SK-N-SH (cell line): ENCODE measurements at regions of chr12 and their contacts with region 1.

Region 1: DNA sequence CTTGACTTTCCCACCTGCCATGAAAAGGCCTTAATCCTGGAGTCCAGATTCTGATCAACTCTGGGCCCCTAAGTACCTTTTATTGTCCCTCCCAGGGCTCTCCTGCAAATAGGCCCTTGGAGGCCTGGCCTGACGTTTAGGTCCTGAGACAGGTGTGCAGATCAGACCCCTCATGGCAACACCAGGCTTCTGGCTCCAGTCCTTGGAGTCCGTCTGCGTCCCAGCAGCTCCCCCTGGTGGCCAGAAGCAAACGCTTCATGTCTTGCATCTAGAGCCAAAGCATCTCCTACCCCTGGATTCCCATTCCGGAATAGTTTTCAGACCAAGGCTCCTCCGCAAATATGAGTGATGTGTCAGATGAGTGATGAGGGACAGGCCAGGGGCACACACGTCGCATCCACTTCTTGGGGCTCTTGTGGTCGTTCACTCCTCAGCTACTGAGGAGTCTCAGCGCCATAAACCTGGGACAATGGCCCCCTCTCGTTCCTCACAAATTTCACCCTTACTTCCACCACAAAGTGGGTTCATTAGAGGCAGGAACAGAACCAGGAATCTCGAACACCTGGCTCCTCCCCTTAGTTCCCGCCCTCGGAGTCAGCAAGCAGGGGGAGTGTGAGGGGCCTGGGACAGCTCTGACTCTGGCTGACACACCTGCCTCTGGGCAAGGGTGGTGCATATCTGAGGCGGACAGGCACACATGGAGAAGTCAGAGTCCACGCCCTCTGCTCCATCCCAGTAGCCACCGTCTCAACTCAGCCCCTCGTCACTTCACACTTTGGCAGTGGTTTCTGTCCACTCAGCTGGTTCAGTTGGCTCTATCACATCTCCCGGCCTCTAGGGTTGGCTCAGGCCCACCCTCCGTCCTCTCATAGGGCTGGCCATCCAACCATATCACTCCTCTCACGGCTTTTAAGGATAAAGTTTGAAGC is 77.9 kb upstream of the PWP1 start:
- DNase-seq: peak; percentile 81
- H3K4me3 ChIP-seq: peak overlapping the region in 1 of 2 experiments; percentile 34; a peak in 1 of 4 replicates
- H3K27ac ChIP-seq: no peak overlapping the region
- H3K4me1 ChIP-seq: peaks cover 0 to 5% of the 10 kb centered on the region in 2 experiments; a peak in 1 of 4 replicates
- H3K27me3 ChIP-seq: no peaks in the 10 kb centered on the region
- CTCF ChIP-seq: peak; percentile 93
- EP300 ChIP-seq: no peak
- RAD21 ChIP-seq: peak; percentile 95

Region 2: DNA sequence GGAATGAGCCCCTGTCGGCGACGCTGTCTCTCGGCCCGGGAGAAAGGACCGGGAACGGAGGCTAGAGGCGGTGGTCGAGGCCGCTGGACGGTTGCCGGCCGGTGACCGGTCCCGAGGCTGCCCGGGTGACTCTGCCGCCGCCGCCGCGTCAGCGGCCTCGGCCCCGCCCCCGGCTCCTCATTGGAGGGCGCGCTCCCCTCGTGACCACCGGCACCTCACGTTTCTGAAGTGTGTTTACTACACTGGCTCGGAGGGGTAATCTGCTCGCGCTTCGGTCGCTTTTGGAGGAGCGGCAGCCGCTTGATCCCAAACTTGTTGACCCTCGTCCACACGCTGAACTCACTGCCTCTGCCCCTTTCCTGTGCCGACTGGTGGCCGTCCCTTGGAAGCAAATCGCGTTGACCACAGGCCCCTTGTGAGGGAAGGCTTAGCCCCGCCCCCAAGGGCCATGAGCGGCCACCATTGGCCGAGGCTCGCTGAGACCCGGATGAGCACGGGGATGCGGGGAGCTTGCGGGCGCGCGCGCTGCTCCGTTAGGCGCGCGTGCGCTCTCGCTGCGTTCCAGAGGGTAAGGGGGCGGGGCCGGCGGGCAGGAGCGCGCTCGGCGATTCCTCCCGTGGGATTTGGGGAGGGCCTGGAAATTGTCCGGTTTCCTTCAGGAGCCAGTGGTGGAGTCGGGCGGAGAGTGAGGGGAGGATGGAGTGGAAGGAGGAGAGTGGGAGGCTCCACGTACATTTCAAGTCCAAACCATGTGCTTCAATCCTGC is 514.1 kb before region 1 on chr12 and contains the start of gene CRY1:
- CTCF ChIA-PET with region 1: interaction called, 11 read pairs
- POLR2A ChIA-PET with region 1: no interaction called
- DNase-seq: peak; percentile 95
- H3K4me3 ChIP-seq: peak within 1 kb of the TSS; percentile 80 to 87
- H3K27ac ChIP-seq: peak within 1 kb of the TSS; percentile 88 to 96
- H3K4me1 ChIP-seq: peaks cover 0 to 15% of the 10 kb centered on the region in 2 experiments; a peak in 2 of 4 replicates
- H3K27me3 ChIP-seq: no peaks in the 10 kb centered on the region
- CTCF ChIP-seq: no peak
- EP300 ChIP-seq: no peak
- RAD21 ChIP-seq: no peak
- polyA plus RNA-seq, gene CRY1: 4.9 and 6.7 TPM in 2 replicates

Region 3: GRCh38 chr12:107402041-107403022 is 205.4 kb before region 1 on chr12:
- CTCF ChIA-PET with region 1: interaction called, 38 read pairs
- POLR2A ChIA-PET with region 1: no interaction called
- DNase-seq: peak; percentile 64
- H3K4me3 ChIP-seq: no peak overlapping the region
- H3K27ac ChIP-seq: peak overlapping the region in 1 of 2 experiments; percentile 34; a peak in 2 of 4 replicates
- H3K4me1 ChIP-seq: peaks cover 0 to 43% of the 10 kb centered on the region in 2 experiments; a peak in 3 of 4 replicates
- H3K27me3 ChIP-seq: no peaks in the 10 kb centered on the region
- CTCF ChIP-seq: peak; percentile 71
- EP300 ChIP-seq: no peak
- RAD21 ChIP-seq: peak; percentile 84

Region 4: DNA sequence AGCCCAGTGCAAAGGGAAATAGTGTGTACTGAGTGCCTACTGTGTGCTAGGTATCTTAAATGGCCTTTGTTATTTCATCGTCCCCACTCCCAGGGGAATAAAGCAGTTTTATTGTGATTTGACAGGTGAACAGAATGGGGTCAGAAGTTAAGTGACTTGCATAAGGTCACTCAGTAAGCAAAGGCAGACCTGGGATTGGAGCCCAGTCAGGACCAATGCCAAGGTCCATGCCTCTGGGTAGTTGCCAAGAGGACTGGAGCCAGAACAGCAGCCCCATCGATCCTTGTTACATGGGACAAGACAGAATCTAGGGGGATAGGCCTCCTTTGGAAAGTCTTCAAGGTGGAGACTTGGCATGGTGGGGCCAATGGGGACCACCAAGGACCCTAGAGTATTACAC is 149.6 kb before region 1 on chr12:
- CTCF ChIA-PET with region 1: interaction called, 10 read pairs
- POLR2A ChIA-PET with region 1: no interaction called
- DNase-seq: no peak
- H3K4me3 ChIP-seq: no peak overlapping the region
- H3K27ac ChIP-seq: no peak overlapping the region
- H3K4me1 ChIP-seq: peaks cover 0 to 10% of the 10 kb centered on the region in 2 experiments; a peak in 1 of 4 replicates
- H3K27me3 ChIP-seq: no peaks in the 10 kb centered on the region
- CTCF ChIP-seq: no peak
- EP300 ChIP-seq: no peak
- RAD21 ChIP-seq: no peak

Region 5: DNA sequence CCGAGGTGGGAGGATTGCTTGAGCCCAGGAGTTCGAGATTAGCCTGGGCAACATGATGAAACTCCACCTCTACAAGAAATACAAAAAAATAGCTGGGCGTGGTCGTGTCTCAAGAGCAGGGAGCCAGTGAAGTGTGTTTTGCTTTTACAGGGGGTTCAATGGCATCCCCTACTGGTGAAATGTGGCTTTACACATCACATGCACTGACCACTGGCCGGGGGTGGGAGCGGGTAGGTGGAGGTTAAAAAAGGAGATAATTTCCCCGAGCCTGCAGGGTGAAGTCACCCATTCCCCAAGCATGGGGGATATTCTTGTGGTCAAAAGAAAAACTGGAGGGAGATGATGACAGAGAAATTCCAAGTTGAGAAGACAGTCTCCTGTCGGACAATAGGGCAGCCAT is 14.3 kb after region 1 on chr12:
- CTCF ChIA-PET with region 1: interaction called, 19 read pairs
- POLR2A ChIA-PET with region 1: no interaction called
- DNase-seq: peak; percentile 60
- H3K4me3 ChIP-seq: no peak overlapping the region
- H3K27ac ChIP-seq: no peak overlapping the region
- H3K4me1 ChIP-seq: no peaks in the 10 kb centered on the region
- H3K27me3 ChIP-seq: no peaks in the 10 kb centered on the region
- CTCF ChIP-seq: peak; percentile 49
- EP300 ChIP-seq: no peak
- RAD21 ChIP-seq: peak; percentile 57